ENCODE measurements at regions of chr4 and their contacts with region 1.

Region 1: DNA sequence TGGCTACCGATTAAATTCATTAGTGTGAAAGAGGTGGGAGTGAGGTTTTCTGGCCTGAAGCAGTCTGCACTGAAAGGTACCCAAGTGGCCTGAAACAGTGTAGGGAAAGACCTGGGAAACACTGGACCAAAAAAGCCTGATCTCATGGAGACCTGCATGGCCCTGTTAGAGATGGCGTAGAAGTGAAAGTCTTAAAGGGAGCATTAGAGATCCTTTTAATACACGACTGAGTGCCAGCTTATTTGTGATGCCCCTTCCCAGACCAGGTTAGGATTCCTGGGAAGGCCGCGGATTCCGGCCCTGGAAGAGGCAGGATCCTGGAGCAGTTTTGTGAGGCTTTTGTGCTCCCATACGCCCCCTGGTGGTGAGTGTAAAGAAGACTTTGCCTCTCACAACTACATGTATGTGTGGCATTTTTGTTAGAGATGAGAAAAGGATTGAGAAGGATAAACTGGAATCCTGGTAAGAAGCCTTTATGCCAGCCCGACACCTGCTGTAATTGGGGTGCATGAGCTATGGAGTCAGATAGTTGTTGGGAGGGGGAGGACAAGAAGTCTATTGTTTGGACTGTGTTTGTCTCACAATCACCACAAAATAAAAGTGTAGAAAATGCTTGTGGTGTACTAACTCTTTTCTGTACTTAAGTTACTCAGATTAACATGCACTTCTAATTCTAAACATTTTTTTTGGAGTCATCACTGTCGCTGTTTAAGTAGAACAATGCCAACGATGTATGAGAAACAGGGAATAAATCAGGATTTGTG is 54.0 kb downstream of the JADE1 start:
- DNase-seq: peak; percentile 75 to 81 (median 76)
- ATAC-seq: peak in 3 of 4 donors; percentile 66 to 68 (median 67)
- H3K4me3 ChIP-seq: no peak overlapping the region
- H3K27ac ChIP-seq: peak overlapping the region in 4 of 12 donors; percentile 16 to 42 (median 24)
- H3K4me1 ChIP-seq: peaks cover 0 to 45% (median 28%) of the 10 kb centered on the region in 12 donors
- H3K27me3 ChIP-seq: no peaks in the 10 kb centered on the region
- CTCF ChIP-seq: peak; percentile 80 to 95 (median 90)
- POLR2A ChIP-seq: no peak

Region 2: DNA sequence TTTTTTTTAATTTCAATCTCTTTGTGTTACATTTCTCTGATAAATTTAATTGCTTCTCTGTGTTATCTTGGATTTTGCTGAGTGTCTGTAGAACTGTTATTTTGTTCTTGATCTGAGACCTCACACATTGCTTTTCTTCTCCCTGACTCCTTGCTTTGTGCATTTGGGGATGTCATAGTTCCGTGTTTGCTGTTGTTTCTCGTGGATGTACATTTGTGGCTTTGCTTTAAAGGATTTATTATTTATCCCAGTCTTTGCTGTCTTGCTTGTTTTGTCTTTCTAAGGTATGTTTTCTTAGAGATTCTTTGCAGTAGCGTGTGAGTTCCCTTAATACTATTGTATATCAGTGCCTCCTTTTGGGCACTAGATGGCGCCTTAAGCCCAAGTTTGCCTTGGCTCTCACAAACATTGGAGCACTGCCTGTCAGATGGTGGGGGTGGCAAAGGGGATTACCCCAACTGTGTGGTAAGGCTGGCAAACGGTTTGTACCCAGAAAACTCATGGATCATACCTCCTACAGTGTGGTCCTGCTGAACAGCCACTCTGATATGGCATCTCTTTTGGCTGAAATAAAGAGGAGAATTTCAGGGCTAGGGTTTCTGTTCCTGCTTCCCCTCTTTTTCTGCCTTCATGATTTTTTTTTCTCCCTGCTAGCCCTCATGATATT is 672.2 kb before region 1 on chr4:
- intact Hi-C with region 1: loop called (anchors 1 to 10 kb)
- DNase-seq: peak in 4 of 5 donors; percentile 43 to 60 (median 50)
- ATAC-seq: peak; percentile 61 to 89 (median 84)
- H3K4me3 ChIP-seq: no peak overlapping the region
- H3K27ac ChIP-seq: no peak overlapping the region
- H3K4me1 ChIP-seq: peaks cover 0 to 11% (median 3%) of the 10 kb centered on the region in 12 donors
- H3K27me3 ChIP-seq: no peaks in the 10 kb centered on the region
- CTCF ChIP-seq: peak; percentile 74 to 90 (median 85)
- POLR2A ChIP-seq: no peak

Region 3: GRCh38 chr4:128565565-128566186 is 297.8 kb before region 1 on chr4:
- intact Hi-C with region 1: loop called (anchors 2 to 10 kb)
- DNase-seq: peak; percentile 35 to 68 (median 51)
- ATAC-seq: peak; percentile 65 to 81 (median 78)
- H3K4me3 ChIP-seq: no peak overlapping the region
- H3K27ac ChIP-seq: no peak overlapping the region
- H3K4me1 ChIP-seq: peaks cover 0 to 12% (median 0%) of the 10 kb centered on the region in 12 donors
- H3K27me3 ChIP-seq: no peaks in the 10 kb centered on the region
- CTCF ChIP-seq: peak; percentile 27 to 66 (median 57)
- POLR2A ChIP-seq: no peak

Region 4: DNA sequence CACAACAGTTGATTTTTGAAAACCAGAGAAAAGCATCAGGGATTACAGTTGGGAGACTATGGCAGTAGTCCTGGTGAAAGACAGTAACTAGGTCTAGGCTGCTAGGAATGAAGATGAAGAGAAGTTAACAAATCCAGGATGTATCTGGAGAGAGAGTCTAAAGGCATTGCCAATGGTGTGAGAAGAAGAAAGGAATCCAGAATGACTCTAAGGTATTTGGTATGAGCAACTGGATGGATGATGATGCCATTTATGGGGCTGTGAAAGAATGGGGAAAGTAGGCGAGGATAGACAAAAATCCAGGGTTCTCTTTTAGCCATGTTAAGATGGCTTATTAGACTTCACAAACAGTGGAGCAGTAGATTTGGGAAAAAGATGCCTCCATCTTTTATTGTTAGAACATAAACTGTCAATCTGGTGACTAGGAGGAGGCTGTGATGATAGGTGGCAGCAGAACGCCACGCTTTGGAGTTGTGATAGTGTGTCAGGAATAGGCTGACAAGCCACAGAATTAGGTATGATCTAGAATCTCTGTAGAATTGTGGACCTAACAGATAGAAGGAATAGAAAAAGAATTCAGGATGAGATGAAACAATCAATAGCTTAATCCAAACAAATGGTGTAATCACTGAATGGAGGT is 81.3 kb before region 1 on chr4:
- intact Hi-C with region 1: loop called in 5 of 10 experiments (anchors 1 to 10 kb)
- DNase-seq: peak in 1 of 5 donors; percentile 56
- ATAC-seq: peak; percentile 54 to 69 (median 62)
- H3K4me3 ChIP-seq: no peak overlapping the region
- H3K27ac ChIP-seq: peak overlapping the region in 1 of 12 donors; percentile 11
- H3K4me1 ChIP-seq: peaks cover 0 to under 1% (median 0%) of the 10 kb centered on the region in 12 donors
- H3K27me3 ChIP-seq: no peaks in the 10 kb centered on the region
- CTCF ChIP-seq: peak in 11 of 12 donors; percentile 11 to 62 (median 42)
- POLR2A ChIP-seq: no peak

Region 5: DNA sequence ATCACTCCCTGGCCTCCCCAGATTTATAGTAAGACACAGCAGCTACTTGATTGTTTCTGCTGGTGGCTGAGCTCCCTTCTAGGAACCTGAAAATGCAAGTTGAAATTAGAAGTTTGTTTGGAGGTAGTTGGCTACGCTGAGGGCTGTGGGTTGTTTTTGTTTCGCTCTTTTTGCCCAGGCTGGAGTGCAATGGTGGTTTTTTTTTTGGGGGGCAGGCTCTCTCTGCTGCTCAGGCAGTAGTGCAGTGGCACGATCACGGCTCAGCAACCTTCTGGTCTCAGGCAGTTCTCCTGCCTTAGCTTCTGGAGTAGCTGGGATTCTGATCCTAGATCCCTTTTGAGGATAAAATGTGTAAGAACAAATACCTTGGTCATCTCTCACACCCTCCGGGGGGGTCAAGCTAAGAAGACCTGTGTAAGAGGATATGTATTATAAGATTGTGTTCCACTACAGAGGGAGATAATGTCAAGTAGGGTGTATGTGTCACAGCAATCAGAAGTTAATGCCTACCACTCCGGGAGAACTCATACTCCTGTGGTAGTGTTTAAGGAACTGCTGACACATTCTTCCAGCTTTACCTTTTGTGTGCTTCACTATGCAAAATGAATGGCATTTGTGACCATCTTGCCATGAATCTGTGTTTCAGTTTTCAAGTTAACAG is 44.3 kb before region 1 on chr4:
- intact Hi-C with region 1: loop called in 2 of 10 experiments (anchors 5 kb)
- DNase-seq: no peak
- ATAC-seq: peak in 2 of 4 donors; percentile 9 to 46
- H3K4me3 ChIP-seq: no peak overlapping the region
- H3K27ac ChIP-seq: no peak overlapping the region
- H3K4me1 ChIP-seq: peaks cover 0 to 49% (median 14%) of the 10 kb centered on the region in 12 donors
- H3K27me3 ChIP-seq: no peaks in the 10 kb centered on the region
- CTCF ChIP-seq: no peak
- POLR2A ChIP-seq: no peak